Ascending aorta (tissue), 2 donors: ENCODE measurements at regions of chr4 and their contacts with region 1.

Region 1: GRCh38 chr4:71229477-71230270 is 109.1 kb upstream of the SLC4A4 start:
- DNase-seq: no peak
- H3K4me3 ChIP-seq: no peak overlapping the region
- H3K27ac ChIP-seq: peak overlapping the region in 1 of 2 donors; percentile 35
- H3K4me1 ChIP-seq: peaks cover 0 to 13% of the 10 kb centered on the region in 2 donors
- H3K27me3 ChIP-seq: no peaks in the 10 kb centered on the region
- CTCF ChIP-seq: peak; percentile 40 to 79 (median 71)

Region 2: GRCh38 chr4:71713611-71714203 is 484.0 kb after region 1 on chr4:
- intact Hi-C with region 1: loop called (anchors 2 kb)
- DNase-seq: no peak
- H3K4me3 ChIP-seq: no peak overlapping the region
- H3K27ac ChIP-seq: no peak overlapping the region
- H3K4me1 ChIP-seq: no peaks in the 10 kb centered on the region
- H3K27me3 ChIP-seq: no peaks in the 10 kb centered on the region
- CTCF ChIP-seq: peak; percentile 41 to 64 (median 49)